A549 (cell line): ENCODE measurements at regions of chr17 and their contacts with region 1.

Region 1: DNA sequence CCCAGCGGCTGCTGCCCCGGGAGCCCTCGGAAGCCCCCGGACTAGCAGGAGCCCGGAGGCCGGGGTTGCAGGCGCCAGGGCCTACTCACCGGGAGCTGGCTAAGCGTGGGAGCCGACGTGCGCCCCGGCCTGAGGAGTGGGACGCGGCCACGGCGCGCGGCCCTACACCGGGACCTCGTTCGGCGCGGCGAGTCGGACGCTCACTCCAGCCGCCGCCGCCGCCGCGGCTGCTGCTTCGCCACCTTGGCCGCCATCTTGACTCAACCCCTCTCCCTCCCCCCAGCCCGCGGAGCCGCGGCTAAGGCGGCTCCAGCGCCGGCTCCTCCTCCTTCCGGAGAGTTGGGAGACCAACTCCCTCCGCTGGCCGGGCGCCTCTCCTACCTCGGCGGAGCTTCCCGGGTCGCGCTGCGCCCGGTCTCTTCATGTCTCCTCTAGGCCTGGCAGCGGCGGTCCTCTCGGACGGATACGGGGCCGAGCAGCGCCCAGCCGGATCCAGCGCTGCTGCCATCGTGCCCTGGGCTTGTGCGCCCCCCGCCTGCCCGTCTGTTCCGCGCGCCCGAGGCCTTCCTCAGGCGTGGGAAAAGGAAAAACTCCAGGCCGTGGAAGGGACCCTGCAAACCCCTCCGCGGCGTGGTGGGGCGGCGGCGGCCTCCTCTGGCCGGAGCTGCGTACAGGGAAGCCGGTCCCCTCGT is at the start of gene NCOR1:
- DNase-seq: peak; percentile 80 to 97
- ATAC-seq: peak; percentile 89 to 92
- H3K4me3 ChIP-seq: peak within 1 kb of the TSS; percentile 75
- H3K27ac ChIP-seq: peak within 1 kb of the TSS; percentile 96 to 97
- H3K4me1 ChIP-seq: peaks cover 34% of the 10 kb centered on the region
- CTCF ChIP-seq: peak; percentile 35; the same call in 2 of the 3 replicates
- EP300 ChIP-seq: no peak
- POLR2A ChIP-seq: peak; percentile 98
- RAD21 ChIP-seq: peak; percentile 30 to 48
- polyA plus RNA-seq, gene NCOR1: 190 and 194 TPM in 2 replicates

Region 2: GRCh38 chr17:16150251-16150856 is 65.1 kb before region 1 on chr17:
- CTCF ChIA-PET with region 1: interaction called, 7 read pairs
- POLR2A ChIA-PET with region 1: interaction called, 15 read pairs
- DNase-seq: peak; percentile 33 to 57
- ATAC-seq: peak; percentile 82 to 92
- H3K4me3 ChIP-seq: 0 out of 3 replicates have a peak overlapping the region, but pooled peaks have one; percentile 3
- H3K27ac ChIP-seq: peak overlapping the region; percentile 60 to 78
- H3K4me1 ChIP-seq: peaks cover 22% of the 10 kb centered on the region
- CTCF ChIP-seq: no peak
- EP300 ChIP-seq: no peak
- POLR2A ChIP-seq: no peak
- RAD21 ChIP-seq: no peak

Region 3: DNA sequence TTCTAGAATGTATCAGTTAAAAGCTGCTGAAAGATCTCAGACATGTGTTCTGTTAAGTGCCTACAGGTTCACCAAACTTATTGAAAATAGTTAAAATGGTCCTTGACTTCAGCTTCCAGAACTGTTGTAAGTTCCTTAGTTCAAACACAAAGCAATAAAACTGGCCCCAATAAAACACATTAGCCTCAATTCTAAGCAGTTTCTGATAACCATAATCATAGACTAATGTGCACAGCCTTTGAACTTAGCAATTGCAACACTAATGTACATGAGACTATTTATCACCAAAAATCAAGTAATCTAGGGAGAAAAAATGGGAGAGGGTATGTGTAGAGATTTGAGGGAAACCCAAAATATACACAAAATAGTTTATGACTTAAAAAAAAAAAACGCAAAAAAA is 17.0 kb after region 1 on chr17:
- CTCF ChIA-PET with region 1: interaction called, 3 read pairs
- POLR2A ChIA-PET with region 1: interaction called, 14 read pairs
- DNase-seq: no peak
- ATAC-seq: no peak
- H3K4me3 ChIP-seq: no peak overlapping the region
- H3K27ac ChIP-seq: no peak overlapping the region
- H3K4me1 ChIP-seq: peaks cover 5% of the 10 kb centered on the region; the same call in 2 of the 3 replicates
- CTCF ChIP-seq: no peak
- EP300 ChIP-seq: no peak
- POLR2A ChIP-seq: no peak
- RAD21 ChIP-seq: no peak

Region 4: GRCh38 chr17:16261049-16261448 is 45.6 kb after region 1 on chr17:
- CTCF ChIA-PET with region 1: no interaction called
- POLR2A ChIA-PET with region 1: no interaction called
- DNase-seq: no peak
- ATAC-seq: no peak
- H3K4me3 ChIP-seq: no peak overlapping the region
- H3K27ac ChIP-seq: no peak overlapping the region
- H3K4me1 ChIP-seq: no peaks in the 10 kb centered on the region
- CTCF ChIP-seq: no peak
- EP300 ChIP-seq: no peak
- POLR2A ChIP-seq: no peak
- RAD21 ChIP-seq: no peak

Region 5: DNA sequence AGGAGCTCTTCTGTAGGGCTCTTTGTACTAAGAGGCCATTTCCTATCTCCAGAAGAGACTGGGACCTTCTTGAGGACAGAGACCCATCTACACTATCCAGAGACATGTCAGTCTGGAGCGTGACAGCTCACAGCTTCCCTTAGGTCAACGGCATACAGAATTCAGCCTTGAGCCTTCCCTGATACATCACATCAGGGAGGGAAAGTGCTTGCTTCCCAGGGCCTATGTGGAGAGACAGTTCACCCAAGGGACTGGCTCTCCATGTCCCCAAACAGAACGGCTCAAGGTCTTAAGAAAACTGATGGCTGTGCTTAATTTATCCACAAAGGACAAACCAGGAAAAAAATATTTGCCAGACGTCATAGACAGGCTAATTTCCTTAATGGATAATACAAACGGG is 130.1 kb after region 1 on chr17:
- CTCF ChIA-PET with region 1: no interaction called
- POLR2A ChIA-PET with region 1: no interaction called
- DNase-seq: no peak
- ATAC-seq: no peak
- H3K4me3 ChIP-seq: no peak overlapping the region
- H3K27ac ChIP-seq: no peak overlapping the region
- H3K4me1 ChIP-seq: peaks cover 9% of the 10 kb centered on the region; the same call in 2 of the 3 replicates
- CTCF ChIP-seq: no peak
- EP300 ChIP-seq: no peak
- POLR2A ChIP-seq: no peak
- RAD21 ChIP-seq: no peak